ENCODE measurements at regions of chr16 and their contacts with region 1.

Region 1: GRCh38 chr16:50765260-50765659 is 23.4 kb downstream of the CYLD start:
- DNase-seq: peak; percentile 23
- H3K4me3 Mint-ChIP-seq: peak overlapping the region; percentile 14
- H3K27ac Mint-ChIP-seq: peak overlapping the region; percentile 79
- H3K4me1 Mint-ChIP-seq: peaks cover 89% of the 10 kb centered on the region
- H3K27me3 Mint-ChIP-seq: no peaks in the 10 kb centered on the region

Region 2: GRCh38 chr16:50719518-50720337 is 45.5 kb before region 1 on chr16:
- CTCF ChIA-PET with region 1: no interaction called
- intact Hi-C with region 1: no loop called
- DNase-seq: peak; percentile 50
- H3K4me3 Mint-ChIP-seq: no peak overlapping the region
- H3K27ac Mint-ChIP-seq: no peak overlapping the region
- H3K4me1 Mint-ChIP-seq: peaks cover 35% of the 10 kb centered on the region
- H3K27me3 Mint-ChIP-seq: no peaks in the 10 kb centered on the region

Region 3: DNA sequence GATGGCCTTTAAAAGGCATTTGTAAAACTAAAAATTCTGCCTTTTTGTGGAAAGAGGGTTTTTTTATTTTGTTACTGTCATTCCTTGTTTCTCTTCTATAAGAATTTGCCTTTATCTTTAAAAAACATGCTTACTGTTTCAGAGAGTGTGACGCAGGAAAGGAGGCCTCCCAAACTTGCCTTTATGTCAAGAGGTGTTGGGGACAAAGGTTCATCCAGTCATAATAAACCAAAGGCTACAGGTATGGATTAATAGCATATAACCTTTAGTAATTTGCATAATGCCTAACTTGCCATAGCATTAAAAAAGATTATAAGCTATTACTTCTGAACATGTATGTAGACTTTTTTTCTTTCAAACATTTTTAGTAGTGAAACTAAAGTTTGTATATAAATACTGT is 10.8 kb after region 1 on chr16:
- CTCF ChIA-PET with region 1: interaction called, 17 read pairs
- intact Hi-C with region 1: loop called (anchors 1 kb)
- DNase-seq: peak; percentile 27
- H3K4me3 Mint-ChIP-seq: no peak overlapping the region
- H3K27ac Mint-ChIP-seq: no peak overlapping the region
- H3K4me1 Mint-ChIP-seq: peaks cover 70% of the 10 kb centered on the region
- H3K27me3 Mint-ChIP-seq: no peaks in the 10 kb centered on the region

Region 4: GRCh38 chr16:51193879-51194278 is 428.6 kb after region 1 on chr16:
- CTCF ChIA-PET with region 1: no interaction called
- intact Hi-C with region 1: no loop called
- DNase-seq: no peak
- H3K4me3 Mint-ChIP-seq: no peak overlapping the region
- H3K27ac Mint-ChIP-seq: no peak overlapping the region
- H3K4me1 Mint-ChIP-seq: no peaks in the 10 kb centered on the region
- H3K27me3 Mint-ChIP-seq: peaks cover 2% of the 10 kb centered on the region

Region 5: DNA sequence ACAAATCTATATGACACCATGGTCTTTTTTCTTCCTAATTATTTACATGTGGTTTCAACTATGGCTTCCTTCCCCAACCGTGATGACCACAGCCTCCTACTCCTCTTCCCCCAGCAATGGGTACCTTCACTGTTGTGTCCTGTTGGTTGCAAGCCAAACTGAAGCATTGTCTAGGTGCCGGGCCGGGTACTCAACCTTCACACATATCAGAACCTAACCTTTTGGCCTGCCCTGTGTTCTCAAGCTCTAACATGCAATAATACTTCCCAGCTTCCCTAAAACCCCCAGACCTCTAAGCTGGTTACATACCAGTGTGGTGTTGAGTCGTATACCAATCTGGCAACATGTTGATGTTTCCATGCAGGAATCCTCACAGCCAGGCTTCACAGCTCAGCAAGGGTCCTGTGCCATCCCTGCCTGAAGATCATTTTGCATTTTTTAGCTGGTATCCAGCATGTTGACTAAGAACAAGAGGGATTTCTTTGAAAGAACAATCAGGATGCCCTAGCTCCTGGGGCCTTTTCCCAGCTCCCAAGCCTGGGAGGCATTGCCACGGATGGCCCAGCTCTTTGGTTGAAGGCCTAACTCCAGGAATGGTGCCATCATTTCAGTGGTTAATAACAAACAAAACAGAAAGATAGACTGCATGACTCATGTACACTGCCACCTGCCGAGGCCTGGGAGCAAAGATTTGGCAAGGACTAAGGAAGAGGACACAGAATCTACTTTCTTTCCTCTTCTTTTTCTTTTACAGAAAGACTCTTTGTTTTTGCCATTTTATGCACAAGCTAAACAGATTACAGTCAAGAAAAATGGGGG is 759.5 kb after region 1 on chr16:
- CTCF ChIA-PET with region 1: no interaction called
- intact Hi-C with region 1: no loop called
- DNase-seq: no peak
- H3K4me3 Mint-ChIP-seq: no peak overlapping the region
- H3K27ac Mint-ChIP-seq: no peak overlapping the region
- H3K4me1 Mint-ChIP-seq: no peaks in the 10 kb centered on the region
- H3K27me3 Mint-ChIP-seq: no peaks in the 10 kb centered on the region